ENCODE measurements at regions of chr10 and their contacts with region 1.

Region 1: GRCh38 chr10:94439275-94439861 is 37.0 kb downstream of the TBC1D12 start:
- DNase-seq: peak in 2 of 5 donors; percentile 39 to 43
- ATAC-seq: peak in 3 of 4 donors; percentile 37 to 70 (median 46)
- H3K4me3 ChIP-seq: no peak overlapping the region
- H3K27ac ChIP-seq: no peak overlapping the region
- H3K4me1 ChIP-seq: peaks cover 0 to 21% (median 5%) of the 10 kb centered on the region in 12 donors
- H3K27me3 ChIP-seq: no peaks in the 10 kb centered on the region
- CTCF ChIP-seq: peak in 4 of 12 donors; percentile 11 to 24 (median 14)
- POLR2A ChIP-seq: no peak

Region 2: GRCh38 chr10:93790439-93790838 is 648.9 kb before region 1 on chr10:
- intact Hi-C with region 1: no loop called
- DNase-seq: no peak
- ATAC-seq: no peak
- H3K4me3 ChIP-seq: no peak overlapping the region
- H3K27ac ChIP-seq: no peak overlapping the region
- H3K4me1 ChIP-seq: no peaks in the 10 kb centered on the region
- H3K27me3 ChIP-seq: peaks cover 0 to 3% (median 0%) of the 10 kb centered on the region in 9 donors
- CTCF ChIP-seq: no peak
- POLR2A ChIP-seq: no peak

Region 3: DNA sequence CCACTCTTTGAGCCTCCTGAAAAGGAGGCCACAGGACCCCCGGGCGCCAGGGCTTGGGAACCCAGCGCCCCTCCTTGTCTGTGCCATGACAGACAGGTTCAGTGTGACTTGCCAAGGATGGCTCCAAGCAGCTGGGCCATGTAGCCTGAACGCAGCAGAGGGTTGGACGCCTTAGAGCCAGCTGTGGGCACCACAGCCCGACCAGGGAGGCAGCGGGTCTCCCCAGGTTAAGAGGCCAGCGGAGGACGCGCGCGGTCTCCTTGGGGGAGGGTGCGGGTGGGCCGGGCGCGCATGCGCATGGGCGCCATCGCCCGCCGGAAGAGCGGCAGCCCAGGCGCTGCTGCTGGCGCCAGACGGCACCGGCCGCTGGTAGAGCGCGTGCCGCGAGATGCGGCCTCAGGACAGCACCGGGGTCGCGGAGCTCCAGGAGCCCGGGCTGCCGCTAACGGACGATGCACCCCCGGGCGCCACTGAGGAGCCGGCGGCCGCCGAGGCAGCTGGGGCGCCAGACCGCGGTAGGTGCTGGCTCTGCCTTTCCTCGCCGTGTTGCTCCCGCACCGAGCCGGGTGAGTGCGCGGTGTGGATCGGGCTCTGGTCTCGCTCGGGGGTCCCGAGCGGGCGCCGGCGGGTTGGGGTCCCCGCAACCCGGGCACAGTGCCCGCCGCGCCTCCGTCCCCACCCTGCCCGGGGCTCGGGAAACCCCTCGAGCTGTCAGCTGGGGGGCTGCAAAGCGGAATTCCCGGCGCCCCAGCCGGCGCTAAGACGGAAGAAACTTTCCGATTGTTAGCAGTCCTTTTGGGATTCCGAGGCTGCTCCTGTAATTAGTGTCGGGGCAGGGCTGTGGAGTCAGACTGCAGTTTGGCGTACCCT is 545.5 kb before region 1 on chr10 and contains the start of gene SLC35G1:
- intact Hi-C with region 1: loop called in 1 of 10 experiments (anchors 10 kb)
- DNase-seq: peak; percentile 44 to 88 (median 69)
- ATAC-seq: peak; percentile 55 to 98 (median 93)
- H3K4me3 ChIP-seq: peak within 1 kb of the TSS; percentile 67 to 95 (median 80)
- H3K27ac ChIP-seq: peak within 1 kb of the TSS in 8 of 12 donors; percentile 19 to 64 (median 49)
- H3K4me1 ChIP-seq: peaks cover 0 to 23% (median 9%) of the 10 kb centered on the region in 12 donors
- H3K27me3 ChIP-seq: no peaks in the 10 kb centered on the region
- CTCF ChIP-seq: no peak
- POLR2A ChIP-seq: peak in 1 of 2 donors; percentile 73
- total RNA-seq, gene SLC35G1: 1.5 to 4.1 (median 2.6) TPM

Region 4: DNA sequence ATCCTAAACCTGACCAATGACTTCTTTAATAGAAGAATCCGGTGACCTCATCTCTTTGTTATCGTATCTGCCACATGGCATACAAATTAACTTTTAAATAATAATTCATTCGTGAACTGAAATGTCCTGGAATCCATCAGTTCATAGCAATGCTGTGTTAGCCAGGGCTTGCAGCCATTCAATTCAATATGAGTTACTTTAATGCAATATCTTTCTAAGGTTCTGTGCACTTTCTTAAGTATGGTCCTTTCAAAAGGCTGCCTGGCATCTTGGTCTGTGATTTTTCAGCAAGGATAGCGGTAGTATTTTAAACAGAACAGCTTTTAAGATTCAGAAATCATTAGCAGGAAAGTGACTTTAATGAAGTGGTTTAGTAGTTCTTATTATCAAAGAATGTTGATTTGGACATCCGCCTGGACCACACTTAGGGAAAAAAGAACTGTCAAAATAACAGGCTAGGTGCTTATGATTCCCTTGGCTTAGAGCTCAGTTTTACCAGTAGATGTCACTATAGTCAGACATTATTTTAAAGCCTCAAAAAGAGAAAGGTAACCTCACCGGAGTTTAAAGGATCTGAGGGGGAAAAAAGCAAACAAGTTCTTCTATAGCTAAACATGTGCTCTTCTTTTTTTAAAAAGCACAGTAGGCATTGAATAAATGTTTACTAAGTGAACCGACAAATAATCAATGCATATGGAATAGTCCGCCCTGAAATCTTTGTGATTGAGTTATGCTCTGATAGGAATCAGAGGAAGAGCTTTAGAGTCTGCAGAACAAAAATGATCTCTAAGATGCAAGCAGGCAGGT is 522.9 kb before region 1 on chr10:
- intact Hi-C with region 1: loop called in 6 of 10 experiments (anchors 5 to 10 kb)
- DNase-seq: no peak
- ATAC-seq: peak in 3 of 4 donors; percentile 63 to 72 (median 66)
- H3K4me3 ChIP-seq: peak overlapping the region in 7 of 12 donors; percentile 4 to 36 (median 14)
- H3K27ac ChIP-seq: no peak overlapping the region
- H3K4me1 ChIP-seq: peaks cover 0 to 13% (median 4%) of the 10 kb centered on the region in 12 donors
- H3K27me3 ChIP-seq: no peaks in the 10 kb centered on the region
- CTCF ChIP-seq: peak in 11 of 12 donors; percentile 33 to 70 (median 56)
- POLR2A ChIP-seq: no peak

Region 5: DNA sequence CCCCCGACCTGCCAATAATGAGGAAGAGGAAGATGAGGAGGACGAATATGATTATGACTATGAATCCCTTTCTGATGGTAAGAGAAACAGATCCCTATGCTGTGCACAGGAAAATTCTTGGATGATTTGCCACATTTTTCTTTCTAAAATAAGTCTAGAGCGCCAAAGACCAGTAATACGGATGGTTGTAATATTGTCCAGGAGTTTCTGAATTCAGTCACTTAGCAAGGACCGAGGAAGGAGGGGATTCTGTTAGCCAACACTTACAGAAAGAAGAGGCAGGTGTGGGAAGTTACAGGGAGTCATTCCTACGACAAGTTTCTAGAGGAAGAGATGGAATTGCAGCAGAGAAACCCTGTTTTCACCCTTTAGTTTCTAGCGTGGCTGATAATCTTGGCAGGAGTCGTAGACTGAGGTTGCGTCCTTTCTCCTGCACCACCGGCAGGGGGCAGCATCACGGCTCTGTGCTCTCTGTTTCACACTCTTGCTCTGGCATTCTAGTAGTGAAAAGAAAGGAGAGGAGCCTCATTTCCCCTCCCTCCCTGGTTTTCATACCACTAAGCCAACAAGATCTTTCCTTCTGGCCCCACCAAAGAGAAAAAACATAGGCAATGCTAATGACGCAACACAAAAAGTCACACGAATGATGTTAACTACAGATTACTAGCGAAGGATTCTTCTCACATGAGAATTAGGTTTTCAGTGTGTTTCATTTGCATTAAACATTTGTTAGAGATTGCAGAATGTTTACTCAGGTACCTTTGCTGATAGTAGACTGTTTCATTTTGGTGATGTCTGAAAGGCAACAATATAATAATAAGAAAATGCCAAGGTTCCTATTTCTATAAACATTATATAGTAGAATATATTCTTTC is 159.3 kb before region 1 on chr10:
- intact Hi-C with region 1: loop called in 5 of 10 experiments (anchors 5 to 10 kb)
- DNase-seq: peak in 4 of 5 donors; percentile 36 to 74 (median 54)
- ATAC-seq: peak; percentile 59 to 76 (median 72)
- H3K4me3 ChIP-seq: no peak overlapping the region
- H3K27ac ChIP-seq: no peak overlapping the region
- H3K4me1 ChIP-seq: peaks cover 0 to 22% (median 7%) of the 10 kb centered on the region in 12 donors
- H3K27me3 ChIP-seq: no peaks in the 10 kb centered on the region
- CTCF ChIP-seq: peak; percentile 74 to 94 (median 88)
- POLR2A ChIP-seq: no peak

Region 6: GRCh38 chr10:94362360-94363250 is 76.8 kb before region 1 on chr10 and contains the start of gene NOC3L:
- intact Hi-C with region 1: loop called (anchors 1 to 10 kb)
- DNase-seq: peak; percentile 93 to 97 (median 97)
- ATAC-seq: peak; percentile 99 to 100 (median 100)
- H3K4me3 ChIP-seq: peak within 1 kb of the TSS; percentile 56 to 84 (median 77)
- H3K27ac ChIP-seq: peak within 1 kb of the TSS in 11 of 12 donors; percentile 25 to 86 (median 64)
- H3K4me1 ChIP-seq: peaks cover 0 to 21% (median 13%) of the 10 kb centered on the region in 12 donors
- H3K27me3 ChIP-seq: no peaks in the 10 kb centered on the region
- CTCF ChIP-seq: peak; percentile 73 to 96 (median 93)
- POLR2A ChIP-seq: peak in 1 of 2 donors; percentile 34
- total RNA-seq, gene NOC3L: 4.5 to 12.0 (median 8.2) TPM

Region 7: DNA sequence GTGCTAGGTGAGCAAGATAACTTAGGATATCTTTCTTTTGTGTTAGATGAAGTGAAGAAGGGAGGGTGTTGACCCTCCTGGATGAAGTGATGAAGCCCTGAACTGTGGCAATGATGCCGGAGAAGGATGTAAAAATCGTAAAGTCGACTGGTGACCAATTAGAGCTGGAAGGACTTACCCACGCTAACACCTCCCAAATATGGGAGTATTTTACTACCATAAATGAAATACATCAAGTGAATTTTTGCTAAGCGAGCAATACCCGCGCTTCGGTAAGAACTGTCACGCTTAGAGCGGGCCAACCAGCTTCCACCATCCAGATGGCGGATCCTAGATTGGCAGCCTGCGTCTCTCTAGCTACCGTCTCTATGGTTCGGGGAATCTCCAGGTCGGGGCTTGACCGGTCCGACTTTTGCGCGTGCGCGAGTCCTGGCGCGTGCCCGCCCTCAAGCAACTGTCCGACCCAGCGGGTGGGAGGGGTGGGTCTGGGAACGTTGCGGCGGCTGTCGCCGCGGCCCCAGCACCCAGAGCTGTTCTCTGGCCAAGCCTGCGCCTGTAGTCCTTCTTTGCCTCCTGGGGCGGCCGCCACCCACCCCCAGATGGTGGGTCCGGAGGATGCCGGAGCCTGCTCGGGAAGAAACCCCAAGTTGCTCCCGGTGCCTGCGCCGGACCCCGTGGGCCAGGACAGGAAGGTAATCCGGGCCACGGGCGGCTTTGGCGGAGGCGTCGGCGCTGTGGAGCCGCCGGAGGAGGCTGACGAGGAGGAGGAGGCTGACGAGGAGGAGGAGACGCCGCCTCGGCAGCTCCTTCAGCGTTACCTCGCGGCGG is 37.1 kb before region 1 on chr10 and contains the start of gene TBC1D12:
- intact Hi-C with region 1: loop called in 4 of 10 experiments (anchors 2 to 5 kb)
- DNase-seq: peak; percentile 96 to 97 (median 96)
- ATAC-seq: peak; percentile 96 to 99 (median 98)
- H3K4me3 ChIP-seq: peak within 1 kb of the TSS; percentile 73 to 99 (median 87)
- H3K27ac ChIP-seq: peak within 1 kb of the TSS; percentile 84 to 99 (median 94)
- H3K4me1 ChIP-seq: peaks cover 0 to 28% (median 16%) of the 10 kb centered on the region in 12 donors
- H3K27me3 ChIP-seq: peaks cover 0 to 11% (median 0%) of the 10 kb centered on the region in 9 donors
- CTCF ChIP-seq: no peak
- POLR2A ChIP-seq: peak in 1 of 2 donors; percentile 63
- total RNA-seq, gene TBC1D12: 3.9 to 9.6 (median 5.2) TPM

Measured in heart left ventricle (tissue), 16 donors.